Natural killer cell (primary cell): ENCODE measurements at regions of chr18 and their contacts with region 1.

Region 1: GRCh38 chr18:34787931-34788532 is 77.9 kb downstream of the DTNA start:
- DNase-seq: peak in 1 of 2 donors; percentile 71
- ATAC-seq: peak; percentile 75 to 88 (median 80)
- H3K4me3 ChIP-seq: no peak overlapping the region
- H3K4me3 Mint-ChIP-seq: no peak overlapping the region
- H3K27ac ChIP-seq: no peak overlapping the region
- H3K27ac Mint-ChIP-seq: no peak overlapping the region
- H3K4me1 ChIP-seq: no peaks in the 10 kb centered on the region
- H3K4me1 Mint-ChIP-seq: no peaks in the 10 kb centered on the region
- H3K27me3 ChIP-seq: peaks cover 2% of the 10 kb centered on the region
- H3K27me3 Mint-ChIP-seq: peaks cover 25 to 36% of the 10 kb centered on the region in 2 donors
- CTCF ChIP-seq: peak; percentile 95

Region 2: DNA sequence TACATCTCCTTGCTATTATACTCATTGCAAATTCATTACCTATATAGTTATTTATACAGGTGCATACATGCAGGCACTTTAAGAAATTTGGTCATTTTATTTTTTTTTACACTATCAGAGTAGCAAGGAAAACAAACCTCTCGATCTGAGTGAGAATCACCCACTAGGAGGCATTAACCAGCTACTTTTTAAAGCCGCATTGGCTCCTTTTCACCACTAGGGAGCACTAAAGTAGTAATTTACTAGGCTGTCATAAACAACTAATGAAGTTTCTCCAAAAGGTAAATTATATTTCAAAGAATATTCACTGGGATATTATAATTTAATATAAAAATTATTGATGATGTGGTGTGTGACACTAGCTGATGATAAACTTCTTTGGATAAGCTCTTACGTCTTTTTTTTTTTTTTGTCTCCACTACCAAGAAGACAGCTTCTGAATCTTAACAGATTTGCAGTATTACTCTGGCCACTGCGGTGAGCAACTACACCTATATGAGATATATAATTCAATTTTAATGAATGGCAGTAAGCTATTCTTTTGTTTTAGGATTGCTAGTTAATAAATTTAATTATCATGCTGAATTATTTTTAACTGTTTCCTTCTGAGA is 665.2 kb before region 1 on chr18:
- intact Hi-C with region 1: loop called (anchors 5 kb)
- DNase-seq: no peak
- ATAC-seq: peak in 1 of 3 donors; percentile 51
- H3K4me3 ChIP-seq: no peak overlapping the region
- H3K4me3 Mint-ChIP-seq: no peak overlapping the region
- H3K27ac ChIP-seq: no peak overlapping the region
- H3K27ac Mint-ChIP-seq: no peak overlapping the region
- H3K4me1 ChIP-seq: no peaks in the 10 kb centered on the region
- H3K4me1 Mint-ChIP-seq: no peaks in the 10 kb centered on the region
- H3K27me3 ChIP-seq: no peaks in the 10 kb centered on the region
- H3K27me3 Mint-ChIP-seq: no peaks in the 10 kb centered on the region
- CTCF ChIP-seq: peak; percentile 48

Region 3: GRCh38 chr18:34483198-34483597 is 304.8 kb before region 1 on chr18:
- intact Hi-C with region 1: no loop called
- DNase-seq: no peak
- ATAC-seq: no peak
- H3K4me3 ChIP-seq: no peak overlapping the region
- H3K4me3 Mint-ChIP-seq: no peak overlapping the region
- H3K27ac ChIP-seq: no peak overlapping the region
- H3K27ac Mint-ChIP-seq: no peak overlapping the region
- H3K4me1 ChIP-seq: no peaks in the 10 kb centered on the region
- H3K4me1 Mint-ChIP-seq: no peaks in the 10 kb centered on the region
- H3K27me3 ChIP-seq: no peaks in the 10 kb centered on the region
- H3K27me3 Mint-ChIP-seq: no peaks in the 10 kb centered on the region
- CTCF ChIP-seq: no peak

Region 4: DNA sequence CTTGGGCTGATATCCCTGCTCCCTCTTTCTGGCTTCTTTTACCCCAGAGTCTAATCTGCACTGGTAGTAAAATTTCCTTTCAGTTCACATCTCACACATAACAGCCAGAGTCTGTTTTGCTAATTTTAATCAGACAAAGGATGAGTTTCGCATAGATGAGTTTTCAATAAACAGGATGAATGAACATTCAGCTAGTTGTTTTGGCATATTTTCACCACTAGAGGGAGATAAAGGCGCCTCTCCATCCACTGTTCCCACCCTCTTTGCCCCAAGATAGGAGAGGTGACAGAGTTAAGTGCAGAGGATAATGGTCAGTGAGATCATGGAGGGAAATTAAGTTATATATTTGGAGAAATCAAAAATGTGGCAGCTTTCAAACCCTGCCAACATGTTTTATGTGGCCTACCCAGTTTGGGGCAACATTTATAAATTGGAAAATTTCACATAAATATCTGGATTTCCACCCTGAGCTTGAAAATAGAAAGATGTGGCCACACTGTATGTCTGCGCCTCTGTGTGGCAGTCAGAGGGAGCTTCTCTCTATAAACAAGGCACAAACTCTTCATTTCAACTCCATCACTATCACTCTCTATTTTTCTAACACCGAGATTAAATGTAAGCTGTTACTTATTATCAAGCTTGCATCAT is 126.4 kb before region 1 on chr18:
- intact Hi-C with region 1: loop called (anchors 1 kb)
- DNase-seq: peak in 1 of 2 donors; percentile 26
- ATAC-seq: peak; percentile 62 to 75 (median 64)
- H3K4me3 ChIP-seq: no peak overlapping the region
- H3K4me3 Mint-ChIP-seq: no peak overlapping the region
- H3K27ac ChIP-seq: no peak overlapping the region
- H3K27ac Mint-ChIP-seq: no peak overlapping the region
- H3K4me1 ChIP-seq: no peaks in the 10 kb centered on the region
- H3K4me1 Mint-ChIP-seq: peaks cover 6 to 7% of the 10 kb centered on the region in 2 donors
- H3K27me3 ChIP-seq: peaks cover 2% of the 10 kb centered on the region
- H3K27me3 Mint-ChIP-seq: peaks cover 30 to 35% of the 10 kb centered on the region in 2 donors
- CTCF ChIP-seq: peak; percentile 94

Region 5: GRCh38 chr18:34738176-34738894 is 49.7 kb before region 1 on chr18:
- intact Hi-C with region 1: no loop called
- DNase-seq: no peak
- ATAC-seq: no peak
- H3K4me3 ChIP-seq: no peak overlapping the region
- H3K4me3 Mint-ChIP-seq: no peak overlapping the region
- H3K27ac ChIP-seq: no peak overlapping the region
- H3K27ac Mint-ChIP-seq: no peak overlapping the region
- H3K4me1 ChIP-seq: no peaks in the 10 kb centered on the region
- H3K4me1 Mint-ChIP-seq: no peaks in the 10 kb centered on the region
- H3K27me3 ChIP-seq: no peaks in the 10 kb centered on the region
- H3K27me3 Mint-ChIP-seq: peaks cover 10 to 41% of the 10 kb centered on the region in 2 donors
- CTCF ChIP-seq: no peak

Region 6: GRCh38 chr18:34752056-34752455 is 36.0 kb before region 1 on chr18:
- intact Hi-C with region 1: no loop called
- DNase-seq: no peak
- ATAC-seq: no peak
- H3K4me3 ChIP-seq: no peak overlapping the region
- H3K4me3 Mint-ChIP-seq: no peak overlapping the region
- H3K27ac ChIP-seq: no peak overlapping the region
- H3K27ac Mint-ChIP-seq: no peak overlapping the region
- H3K4me1 ChIP-seq: no peaks in the 10 kb centered on the region
- H3K4me1 Mint-ChIP-seq: no peaks in the 10 kb centered on the region
- H3K27me3 ChIP-seq: peaks cover 2% of the 10 kb centered on the region
- H3K27me3 Mint-ChIP-seq: peaks cover 22 to 47% of the 10 kb centered on the region in 2 donors
- CTCF ChIP-seq: no peak